Activated CD8-positive, alpha-beta memory T cell treated with anti-CD3 and anti-CD28 coated beads, Interleukin-2, amount 10 ng/mL, durations not matched to agents 7 days and 5 days (primary cell): ENCODE measurements at regions of chr11 and their contacts with region 1.

Region 1: DNA sequence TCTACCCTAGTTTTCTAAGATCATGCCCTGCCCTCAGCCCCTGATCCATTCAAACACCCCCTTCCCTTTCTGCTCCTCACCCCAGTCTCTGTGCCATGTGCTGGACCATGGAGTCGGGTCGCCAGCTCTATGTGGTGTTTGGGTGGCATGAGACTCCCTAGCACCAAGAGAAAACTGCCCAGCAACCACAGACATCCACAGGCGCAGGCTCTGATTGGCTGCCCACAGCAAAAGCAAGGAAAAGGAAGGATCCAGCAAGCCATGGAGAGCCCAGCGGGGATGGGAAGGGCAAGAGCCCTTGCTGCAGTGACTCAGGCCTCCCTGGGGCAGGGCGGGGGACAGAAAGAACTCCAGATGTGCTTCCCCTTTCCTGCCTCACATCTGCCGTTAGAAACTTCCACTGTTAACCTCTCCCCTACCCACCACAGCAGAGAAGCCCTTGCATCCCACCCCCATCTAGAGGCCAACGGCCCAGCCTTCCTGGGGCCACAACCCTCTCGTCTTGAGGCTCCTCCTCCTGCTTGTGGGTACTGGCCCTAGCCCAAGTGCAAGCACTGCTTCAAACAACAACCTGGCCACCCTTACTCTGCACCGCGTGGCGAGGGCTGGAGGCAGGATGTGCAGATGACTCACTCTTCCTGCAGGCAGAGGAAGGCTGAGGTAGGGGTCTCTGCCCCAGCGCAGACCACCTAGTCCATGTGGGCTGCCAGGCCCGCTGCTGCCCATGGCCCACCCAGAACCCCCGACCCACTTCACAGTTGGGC is 9.7 kb upstream of the AHNAK start:
- DNase-seq: peak; percentile 98
- ATAC-seq: peak; percentile 64
- H3K4me3 Mint-ChIP-seq: peak overlapping the region; percentile 65
- H3K27ac Mint-ChIP-seq: peak overlapping the region; percentile 96
- H3K4me1 Mint-ChIP-seq: peaks cover 96% of the 10 kb centered on the region
- H3K27me3 Mint-ChIP-seq: peaks cover 2% of the 10 kb centered on the region

Region 2: GRCh38 chr11:62400760-62401159 is 155.5 kb before region 1 on chr11:
- CTCF ChIA-PET with region 1: interaction called, 40 read pairs
- DNase-seq: no peak
- ATAC-seq: no peak
- H3K4me3 Mint-ChIP-seq: no peak overlapping the region
- H3K27ac Mint-ChIP-seq: no peak overlapping the region
- H3K4me1 Mint-ChIP-seq: peaks cover 22% of the 10 kb centered on the region
- H3K27me3 Mint-ChIP-seq: no peaks in the 10 kb centered on the region

Region 3: GRCh38 chr11:62419314-62419929 is 136.9 kb before region 1 on chr11:
- CTCF ChIA-PET with region 1: interaction called, 207 read pairs
- DNase-seq: no peak
- ATAC-seq: no peak
- H3K4me3 Mint-ChIP-seq: no peak overlapping the region
- H3K27ac Mint-ChIP-seq: no peak overlapping the region
- H3K4me1 Mint-ChIP-seq: peaks cover 2% of the 10 kb centered on the region
- H3K27me3 Mint-ChIP-seq: peaks cover 9% of the 10 kb centered on the region

Region 4: DNA sequence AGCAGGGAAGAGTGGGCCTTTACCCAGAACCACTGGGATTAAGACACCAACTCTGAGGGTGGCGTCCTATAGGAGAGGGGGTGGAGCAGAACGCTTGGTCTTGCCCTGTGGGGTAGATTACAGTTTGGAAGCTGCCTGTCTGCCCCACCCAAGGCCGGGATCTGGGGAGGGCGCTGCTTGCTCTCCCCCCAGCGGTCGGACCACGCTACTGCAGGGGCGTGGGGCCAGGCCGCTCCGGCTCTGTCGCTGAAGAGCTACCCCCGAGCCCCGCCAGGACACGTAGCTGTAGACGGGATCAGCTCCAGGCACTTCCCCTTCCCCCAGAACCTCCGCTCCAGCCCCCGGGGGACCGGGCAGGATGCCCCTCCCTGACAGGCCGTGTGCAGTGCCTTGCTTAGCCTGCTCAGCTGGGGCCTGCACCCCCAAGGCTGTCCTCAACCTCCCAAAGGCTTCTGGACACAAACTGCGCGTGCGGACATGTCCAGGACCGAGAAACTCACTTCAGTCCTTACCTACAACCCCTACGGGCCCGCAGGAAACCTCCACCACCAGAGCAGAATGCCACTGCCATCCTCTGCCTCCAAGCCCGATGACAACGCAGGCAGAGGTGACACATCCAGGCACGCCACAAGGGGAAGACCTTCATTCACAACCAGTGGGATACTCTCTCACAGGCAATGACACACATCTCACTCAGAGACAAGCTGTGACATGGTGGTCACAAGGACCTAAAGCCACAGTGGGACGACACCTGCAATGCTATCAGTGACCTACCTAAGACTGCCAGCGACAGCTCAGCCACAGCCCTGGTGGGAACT is 13.3 kb before region 1 on chr11:
- CTCF ChIA-PET with region 1: interaction called, 354 read pairs
- DNase-seq: peak; percentile 89
- ATAC-seq: peak; percentile 37
- H3K4me3 Mint-ChIP-seq: peak overlapping the region; percentile 98
- H3K27ac Mint-ChIP-seq: peak overlapping the region; percentile 89
- H3K4me1 Mint-ChIP-seq: peaks cover 70% of the 10 kb centered on the region
- H3K27me3 Mint-ChIP-seq: peaks cover 6% of the 10 kb centered on the region

Region 5: GRCh38 chr11:62573592-62574362 is 17.5 kb after region 1 on chr11 and contains the start of gene EEF1G:
- CTCF ChIA-PET with region 1: interaction called, 60 read pairs
- DNase-seq: peak; percentile 100
- ATAC-seq: peak; percentile 94
- H3K4me3 Mint-ChIP-seq: peak within 1 kb of the TSS; percentile 94
- H3K27ac Mint-ChIP-seq: peak within 1 kb of the TSS; percentile 89
- H3K4me1 Mint-ChIP-seq: peaks cover 51% of the 10 kb centered on the region
- H3K27me3 Mint-ChIP-seq: no peaks in the 10 kb centered on the region
- total RNA-seq, gene EEF1G: 878 to 1,201 TPM

Region 6: DNA sequence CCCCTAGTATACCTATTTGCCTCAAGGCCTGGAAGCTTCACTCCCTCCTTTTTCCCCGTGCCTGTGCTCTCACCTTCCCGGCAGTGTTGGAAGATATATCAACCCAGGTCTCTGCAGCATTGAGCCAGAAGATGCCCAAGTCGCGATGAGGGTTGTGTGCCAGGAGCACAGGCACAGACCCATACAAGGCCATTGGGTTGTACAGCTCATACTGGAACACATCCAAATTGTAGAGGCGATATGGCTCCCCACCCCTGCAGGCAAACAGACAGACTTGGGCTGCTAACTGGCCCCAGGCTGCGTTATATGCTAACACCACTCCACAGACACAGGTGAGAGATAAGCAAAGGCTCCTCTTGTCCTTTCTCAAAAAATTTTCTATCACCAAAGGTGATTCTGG is 76.2 kb after region 1 on chr11:
- CTCF ChIA-PET with region 1: no interaction called
- DNase-seq: no peak
- ATAC-seq: no peak
- H3K4me3 Mint-ChIP-seq: no peak overlapping the region
- H3K27ac Mint-ChIP-seq: no peak overlapping the region
- H3K4me1 Mint-ChIP-seq: peaks cover 15% of the 10 kb centered on the region
- H3K27me3 Mint-ChIP-seq: no peaks in the 10 kb centered on the region